Cardiac septum (tissue), 1 donor: ENCODE measurements at regions of chr13 and their contacts with region 1.

Region 1: GRCh38 chr13:107211073-107211472 is 643.1 kb upstream of the ARGLU1 start:
- DNase-seq: no peak

Region 2: GRCh38 chr13:107251341-107251740 is 40.3 kb after region 1 on chr13:
- intact Hi-C with region 1: no loop called
- DNase-seq: no peak

Region 3: GRCh38 chr13:107365466-107366215 is 154.6 kb after region 1 on chr13:
- intact Hi-C with region 1: loop called (anchors 10 kb)
- DNase-seq: no peak

Region 4: DNA sequence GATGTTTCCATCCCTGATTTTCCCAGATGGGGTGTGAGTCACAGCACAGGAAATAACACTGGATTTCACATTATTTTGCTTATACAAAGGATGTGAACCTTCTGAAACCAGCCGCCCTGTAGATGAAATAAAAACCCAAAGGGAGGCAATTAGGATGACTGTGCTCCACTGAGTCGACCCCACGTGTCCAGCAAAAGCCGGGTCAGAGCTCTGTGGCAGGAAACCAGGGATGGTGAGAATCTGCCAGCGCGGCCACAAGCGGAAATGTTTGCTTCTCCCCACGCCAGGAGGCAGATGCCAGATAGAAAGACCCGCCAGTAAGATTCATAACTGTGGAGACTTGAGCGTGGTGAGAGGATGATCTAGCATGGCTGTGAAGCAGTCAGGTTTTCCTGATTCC is 239.9 kb after region 1 on chr13:
- intact Hi-C with region 1: loop called (anchors 5 kb)
- DNase-seq: no peak

Region 5: GRCh38 chr13:107867701-107868661 is 656.9 kb after region 1 on chr13:
- intact Hi-C with region 1: loop called (anchors 10 kb)
- DNase-seq: no peak

Region 6: GRCh38 chr13:108102771-108103170 is 891.7 kb after region 1 on chr13:
- intact Hi-C with region 1: no loop called
- DNase-seq: no peak

Region 7: DNA sequence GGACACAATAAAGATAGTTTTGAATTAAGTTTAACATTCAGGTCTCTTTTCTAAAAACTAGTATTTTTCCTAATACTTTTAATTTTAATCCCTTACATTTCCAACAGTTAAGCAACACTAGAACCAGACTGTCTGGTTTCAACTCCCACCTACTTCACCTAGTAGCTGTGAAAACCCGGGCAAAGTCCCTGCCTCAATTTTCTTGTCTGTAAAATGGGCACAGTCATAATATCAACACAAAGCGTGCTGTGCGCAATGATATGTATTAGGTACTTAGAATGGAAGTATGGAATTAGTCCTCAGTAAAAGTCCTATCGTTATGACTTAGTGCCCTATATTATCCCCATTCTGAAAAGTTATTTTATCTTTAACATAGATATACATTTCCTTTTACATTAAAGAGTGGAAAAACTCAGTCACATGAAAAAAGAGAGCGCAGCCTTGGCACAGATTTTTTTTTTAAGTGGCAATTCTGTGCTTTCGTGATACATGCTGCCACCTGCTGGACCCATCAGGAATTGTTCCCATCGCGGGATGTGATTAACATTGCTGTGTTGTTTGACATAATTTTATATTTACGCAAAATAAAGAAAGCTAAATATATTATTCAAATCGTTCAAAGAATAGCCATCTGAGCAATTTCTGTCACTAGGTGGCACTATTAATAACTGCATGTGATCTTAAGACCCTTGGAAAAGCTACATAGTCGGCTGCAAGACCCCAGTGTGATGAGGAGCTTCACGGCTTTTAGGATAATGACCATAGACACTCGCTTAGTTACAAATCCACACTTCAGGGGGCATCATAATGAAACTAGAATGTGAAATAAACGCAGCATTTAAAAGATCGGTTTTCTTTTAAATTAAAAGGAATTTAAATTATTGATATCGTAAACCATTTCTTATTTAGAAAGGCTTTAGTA is 944.4 kb after region 1 on chr13:
- intact Hi-C with region 1: loop called (anchors 2 kb)
- DNase-seq: no peak